ENCODE measurements at regions of chr17 and their contacts with region 1.

Region 1: DNA sequence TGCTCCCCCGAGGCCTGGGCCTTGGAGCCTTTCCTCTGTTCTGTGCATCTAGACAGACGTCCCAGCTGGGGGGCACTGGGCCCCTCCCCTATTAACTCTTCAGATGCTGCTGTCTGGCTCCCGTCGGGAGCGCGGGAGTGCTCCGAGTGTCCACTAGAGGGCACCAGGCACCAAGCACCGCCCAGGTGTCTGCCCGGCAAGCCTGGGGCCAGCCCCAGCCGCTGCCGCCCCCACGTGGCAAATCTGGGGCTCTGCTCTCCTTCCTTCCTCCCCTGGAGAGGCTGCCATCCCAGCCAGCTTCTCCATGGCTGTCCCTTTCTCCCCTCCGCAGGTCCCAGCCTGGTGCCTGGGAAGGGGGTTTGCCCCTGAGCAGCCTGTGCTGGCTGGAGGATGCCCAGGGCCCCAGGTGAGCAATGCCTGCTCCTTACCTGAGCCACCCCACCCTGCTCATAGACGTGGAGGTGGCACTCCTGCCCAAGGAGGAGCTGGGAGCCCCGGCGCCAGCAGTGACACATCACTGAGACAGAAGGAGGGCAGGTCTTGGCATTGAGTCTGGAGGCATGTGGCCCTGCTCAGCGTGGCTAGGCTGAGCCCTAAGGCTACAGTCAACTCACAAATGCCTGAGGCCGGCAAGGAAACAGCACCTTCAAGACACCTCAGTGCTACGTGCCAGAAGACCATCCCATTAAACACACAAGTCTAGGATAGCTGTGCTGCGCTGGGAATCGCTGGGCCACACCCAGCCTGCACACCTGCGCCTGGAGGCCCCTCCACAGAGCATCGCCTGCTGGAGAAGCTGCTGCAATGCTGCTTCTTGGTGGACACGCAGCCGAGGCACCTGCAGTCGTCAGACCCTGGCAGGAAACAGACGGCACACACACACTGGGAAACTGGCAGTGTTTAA is 19.7 kb downstream of the TMEM235 start:
- DNase-seq: peak; percentile 71 to 89 (median 82)
- ATAC-seq: peak; percentile 27 to 34
- H3K4me3 Mint-ChIP-seq: peak overlapping the region; percentile 78 to 95 (median 86)
- H3K27ac Mint-ChIP-seq: peak overlapping the region; percentile 82 to 100 (median 97)
- H3K4me1 Mint-ChIP-seq: peaks cover 16 to 55% (median 49%) of the 10 kb centered on the region in 4 donors
- H3K27me3 Mint-ChIP-seq: no peaks in the 10 kb centered on the region

Region 2: GRCh38 chr17:78133971-78134898 is 116.9 kb before region 1 on chr17:
- POLR2A ChIA-PET with region 1: interaction called, 21 read pairs
- DNase-seq: peak; percentile 64 to 93 (median 80)
- ATAC-seq: peak; percentile 19 to 27
- H3K4me3 Mint-ChIP-seq: peak overlapping the region; percentile 75 to 100 (median 90)
- H3K27ac Mint-ChIP-seq: peak overlapping the region; percentile 87 to 97 (median 90)
- H3K4me1 Mint-ChIP-seq: peaks cover 49 to 86% (median 79%) of the 10 kb centered on the region in 4 donors
- H3K27me3 Mint-ChIP-seq: no peaks in the 10 kb centered on the region

Region 3: GRCh38 chr17:78154903-78155811 is 96.0 kb before region 1 on chr17:
- POLR2A ChIA-PET with region 1: no interaction called
- DNase-seq: no peak
- ATAC-seq: peak; percentile 35 to 65
- H3K4me3 Mint-ChIP-seq: peak overlapping the region in 1 of 10 donors; percentile 9
- H3K27ac Mint-ChIP-seq: peak overlapping the region in 4 of 10 donors; percentile 7 to 71 (median 51)
- H3K4me1 Mint-ChIP-seq: peaks cover 0 to 32% (median under 1%) of the 10 kb centered on the region in 4 donors
- H3K27me3 Mint-ChIP-seq: no peaks in the 10 kb centered on the region

Region 4: GRCh38 chr17:78341559-78342448 is 90.7 kb after region 1 on chr17:
- POLR2A ChIA-PET with region 1: interaction called, 10 read pairs
- DNase-seq: peak in 3 of 10 donors; percentile 14 to 44 (median 36)
- ATAC-seq: peak in 1 of 2 donors; percentile 29
- H3K4me3 Mint-ChIP-seq: peak overlapping the region in 9 of 10 donors; percentile 24 to 87 (median 67)
- H3K27ac Mint-ChIP-seq: peak overlapping the region in 3 of 10 donors; percentile 65 to 99 (median 75)
- H3K4me1 Mint-ChIP-seq: peaks cover 23 to 82% (median 66%) of the 10 kb centered on the region in 4 donors
- H3K27me3 Mint-ChIP-seq: no peaks in the 10 kb centered on the region

Region 5: GRCh38 chr17:78360371-78361224 is 109.5 kb after region 1 on chr17:
- POLR2A ChIA-PET with region 1: interaction called, 11 read pairs
- DNase-seq: peak; percentile 66 to 92 (median 84)
- ATAC-seq: peak; percentile 15 to 29
- H3K4me3 Mint-ChIP-seq: peak overlapping the region; percentile 74 to 91 (median 86)
- H3K27ac Mint-ChIP-seq: peak overlapping the region; percentile 59 to 96 (median 94)
- H3K4me1 Mint-ChIP-seq: peaks cover 15 to 50% (median 43%) of the 10 kb centered on the region in 4 donors
- H3K27me3 Mint-ChIP-seq: no peaks in the 10 kb centered on the region

Region 6: DNA sequence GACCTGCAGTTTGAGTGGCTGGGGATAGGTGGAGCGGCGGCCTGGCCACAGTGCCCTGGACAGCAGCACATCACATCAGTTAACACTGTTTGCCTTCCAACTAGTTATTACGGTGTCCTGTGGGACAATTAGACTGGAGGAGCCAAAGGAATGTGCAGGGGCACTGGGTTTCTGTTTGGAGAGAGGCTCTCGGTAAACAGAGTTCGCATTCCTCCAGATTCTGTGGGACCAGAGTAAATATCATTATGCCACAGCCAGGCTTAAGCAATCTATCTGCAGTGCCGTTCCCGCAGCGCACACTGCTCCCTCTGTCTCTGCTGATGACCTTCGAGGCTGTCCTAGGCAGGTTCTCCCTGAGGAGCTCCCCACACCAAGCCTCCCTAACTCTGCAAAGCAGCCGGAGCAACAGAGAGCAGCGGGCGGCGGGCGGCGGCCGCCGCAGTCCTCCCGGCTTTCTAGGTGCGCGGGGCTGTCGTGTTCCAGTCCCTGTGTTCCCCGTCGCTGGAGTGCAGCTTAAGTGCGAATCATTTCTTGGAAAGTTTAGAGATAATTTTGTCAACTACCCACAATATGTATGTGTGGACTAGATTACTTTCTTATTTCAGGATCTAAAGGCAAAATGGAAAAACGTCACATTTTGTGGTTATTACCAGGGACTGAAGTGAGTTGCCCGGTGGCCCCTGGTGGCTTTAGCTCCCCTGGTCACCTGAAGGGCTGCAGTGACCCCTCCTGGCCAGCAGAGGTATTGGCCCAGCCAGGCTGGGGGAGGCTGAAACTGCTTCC is 170.5 kb after region 1 on chr17:
- POLR2A ChIA-PET with region 1: interaction called, 17 read pairs
- DNase-seq: peak; percentile 52 to 80 (median 68)
- ATAC-seq: peak; percentile 66 to 83
- H3K4me3 Mint-ChIP-seq: no peak overlapping the region
- H3K27ac Mint-ChIP-seq: peak overlapping the region in 4 of 10 donors; percentile 38 to 75 (median 56)
- H3K4me1 Mint-ChIP-seq: peaks cover 7 to 21% (median 12%) of the 10 kb centered on the region in 4 donors
- H3K27me3 Mint-ChIP-seq: no peaks in the 10 kb centered on the region

Measured in naive thymus-derived CD8-positive, alpha-beta T cell (primary cell).